ENCODE measurements at regions of chr3 and their contacts with region 1.

Region 1: GRCh38 chr3:185498503-185499396 is at the start of gene TMEM41A:
- DNase-seq: peak; percentile 88
- H3K4me3 Mint-ChIP-seq: peak within 1 kb of the TSS; percentile 96
- H3K27ac Mint-ChIP-seq: peak within 1 kb of the TSS; percentile 97
- H3K4me1 Mint-ChIP-seq: peaks cover 18% of the 10 kb centered on the region
- H3K27me3 Mint-ChIP-seq: no peaks in the 10 kb centered on the region
- CTCF ChIP-seq: no peak
- total RNA-seq, gene TMEM41A: 15.3 and 20.0 TPM in 2 replicates

Region 2: GRCh38 chr3:185552358-185552877 is 53.7 kb after region 1 on chr3 and contains the start of gene LIPH:
- CTCF ChIA-PET with region 1: interaction called, 3 read pairs
- POLR2A ChIA-PET with region 1: interaction called, 7 read pairs
- intact Hi-C with region 1: loop called (anchors 2 kb)
- DNase-seq: peak; percentile 51
- H3K4me3 Mint-ChIP-seq: peak within 1 kb of the TSS; percentile 14
- H3K27ac Mint-ChIP-seq: peak within 1 kb of the TSS; percentile 65
- H3K4me1 Mint-ChIP-seq: peaks cover 24% of the 10 kb centered on the region
- H3K27me3 Mint-ChIP-seq: no peaks in the 10 kb centered on the region
- CTCF ChIP-seq: no peak
- total RNA-seq, gene LIPH: 0.07 and 0.32 TPM in 2 replicates

Region 3: DNA sequence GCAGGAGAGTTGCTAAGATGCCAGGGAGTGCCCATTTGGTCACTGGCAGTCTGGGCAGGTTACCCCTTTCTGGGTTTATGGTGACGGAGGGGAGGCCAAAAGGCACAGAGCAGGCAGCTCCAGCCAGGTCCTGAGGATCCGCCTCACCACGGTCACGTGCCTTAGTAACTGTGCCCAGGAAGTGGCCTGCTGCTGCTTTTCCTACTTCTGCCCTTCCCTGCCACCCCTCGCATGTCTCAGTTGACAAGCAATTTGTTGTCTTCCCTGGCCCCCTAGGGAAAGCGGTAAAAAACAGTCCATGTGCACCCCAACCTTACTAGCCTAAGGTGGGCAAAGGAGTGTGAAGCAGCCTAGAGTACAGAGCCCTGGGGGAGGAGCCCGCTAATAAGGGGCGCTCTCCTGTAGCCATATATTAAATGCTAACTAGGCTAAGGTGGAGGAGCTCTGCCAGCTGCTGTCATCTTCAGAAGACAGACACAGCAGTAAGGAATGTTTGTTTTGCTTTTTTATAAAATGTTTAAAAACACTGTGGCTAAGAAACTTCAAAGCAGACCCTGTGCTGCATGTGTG is 62.7 kb after region 1 on chr3:
- CTCF ChIA-PET with region 1: interaction called, 8 read pairs
- POLR2A ChIA-PET with region 1: interaction called, 13 read pairs
- intact Hi-C with region 1: loop called (anchors 1 kb)
- DNase-seq: no peak
- H3K4me3 Mint-ChIP-seq: no peak overlapping the region
- H3K27ac Mint-ChIP-seq: no peak overlapping the region
- H3K4me1 Mint-ChIP-seq: peaks cover 15% of the 10 kb centered on the region
- H3K27me3 Mint-ChIP-seq: no peaks in the 10 kb centered on the region
- CTCF ChIP-seq: no peak

Region 4: DNA sequence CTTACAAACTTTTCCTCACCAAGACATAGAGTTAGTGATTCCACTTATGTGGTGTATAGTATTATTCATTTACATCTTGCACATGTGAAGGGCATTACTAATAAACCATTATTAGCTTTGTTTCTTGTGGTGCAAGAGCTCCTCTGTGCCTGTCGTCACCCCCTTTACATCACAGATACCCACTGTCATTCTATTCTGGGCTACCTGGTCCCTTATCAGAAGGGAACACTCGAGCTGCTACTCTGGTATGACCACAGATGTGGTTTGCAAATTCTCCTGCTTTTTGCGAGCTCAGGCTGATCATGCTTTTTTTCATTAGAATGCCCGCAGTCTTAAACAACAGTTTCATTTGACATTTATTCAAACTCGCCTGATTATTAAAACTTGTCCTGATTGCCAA is 73.4 kb after region 1 on chr3:
- CTCF ChIA-PET with region 1: interaction called, 3 read pairs
- POLR2A ChIA-PET with region 1: no interaction called
- intact Hi-C with region 1: loop called (anchors 1 kb)
- DNase-seq: no peak
- H3K4me3 Mint-ChIP-seq: no peak overlapping the region
- H3K27ac Mint-ChIP-seq: no peak overlapping the region
- H3K4me1 Mint-ChIP-seq: peaks cover 7% of the 10 kb centered on the region
- H3K27me3 Mint-ChIP-seq: no peaks in the 10 kb centered on the region
- CTCF ChIP-seq: no peak

Region 5: DNA sequence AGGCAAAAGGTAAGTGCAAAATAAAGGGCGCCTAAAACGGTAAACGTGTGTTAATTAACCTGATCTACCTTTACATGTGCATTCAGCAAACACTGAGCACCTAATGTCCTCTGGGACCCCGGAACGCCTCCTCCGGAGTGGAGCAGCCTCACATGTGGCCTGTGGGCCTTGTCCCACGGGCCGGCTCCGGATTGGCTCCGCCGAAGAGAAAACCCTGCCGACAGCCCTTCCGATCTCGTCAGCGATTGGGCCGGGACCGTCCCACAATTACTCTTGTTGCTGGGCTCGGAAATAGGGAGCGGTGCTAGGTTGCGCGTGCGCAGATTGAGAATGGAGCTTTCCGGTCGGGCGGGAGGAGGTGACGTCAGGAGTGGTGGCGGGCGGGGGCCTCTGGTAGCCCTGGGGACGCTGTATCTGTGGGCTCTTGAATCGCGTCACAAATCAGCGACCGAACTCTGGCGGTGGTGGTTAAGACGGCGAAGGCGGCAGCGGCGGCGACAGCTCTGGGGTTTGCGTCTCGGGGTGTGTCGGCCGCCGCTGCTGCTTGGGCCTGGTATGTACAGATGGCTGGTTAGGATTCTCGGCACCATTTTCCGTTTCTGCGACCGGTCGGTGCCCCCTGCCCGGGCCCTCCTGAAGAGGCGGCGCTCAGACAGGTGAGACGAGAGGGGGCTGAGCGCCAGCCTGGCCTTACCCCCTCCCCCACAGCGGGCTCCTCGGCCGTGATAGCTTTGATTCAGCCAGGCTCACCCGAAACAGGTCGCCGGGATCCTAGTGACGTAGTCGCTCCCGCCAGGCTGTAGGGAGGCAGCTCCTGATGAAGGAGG is 87.3 kb after region 1 on chr3 and contains the start of gene SENP2:
- CTCF ChIA-PET with region 1: no interaction called
- POLR2A ChIA-PET with region 1: interaction called, 13 read pairs
- intact Hi-C with region 1: no loop called
- DNase-seq: peak; percentile 99
- H3K4me3 Mint-ChIP-seq: peak within 1 kb of the TSS; percentile 96
- H3K27ac Mint-ChIP-seq: peak within 1 kb of the TSS; percentile 98
- H3K4me1 Mint-ChIP-seq: peaks cover 10% of the 10 kb centered on the region
- H3K27me3 Mint-ChIP-seq: no peaks in the 10 kb centered on the region
- CTCF ChIP-seq: no peak
- total RNA-seq, gene SENP2: 27.0 and 38.5 TPM in 2 replicates

Measured in MCF 10A (cell line).